ENCODE measurements at regions of chr7 and their contacts with region 1.

Region 1: DNA sequence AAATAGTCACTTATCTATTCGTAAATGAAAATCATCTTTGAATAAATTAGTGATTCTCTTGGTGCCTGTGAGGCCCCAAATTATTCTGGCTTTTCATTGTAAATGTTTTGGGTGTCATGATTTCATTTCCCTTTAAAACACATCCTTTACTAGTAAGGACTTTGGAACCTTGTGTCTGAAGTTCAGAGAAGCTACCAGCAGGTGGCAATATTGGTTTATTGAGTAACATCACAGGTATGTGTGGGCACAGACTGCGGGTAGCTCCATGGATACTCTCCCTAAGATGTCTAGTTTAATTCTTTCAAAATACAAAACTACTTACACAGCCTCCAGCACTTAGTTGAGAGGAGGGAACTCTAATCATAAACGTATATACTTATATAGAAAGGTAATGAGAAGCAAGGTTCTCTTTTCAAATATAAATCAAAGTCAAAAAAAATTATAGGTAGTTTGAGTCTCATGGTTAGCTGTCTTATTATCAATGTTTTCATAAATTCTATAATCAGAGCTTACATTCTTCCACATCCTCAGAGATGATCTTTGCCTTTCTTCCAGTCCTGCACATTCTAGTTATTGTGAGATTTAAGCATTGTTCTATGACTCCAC is 449.6 kb downstream of the GRM8 start:
- DNase-seq: peak; percentile 59
- CTCF ChIP-seq: peak; percentile 69

Region 2: DNA sequence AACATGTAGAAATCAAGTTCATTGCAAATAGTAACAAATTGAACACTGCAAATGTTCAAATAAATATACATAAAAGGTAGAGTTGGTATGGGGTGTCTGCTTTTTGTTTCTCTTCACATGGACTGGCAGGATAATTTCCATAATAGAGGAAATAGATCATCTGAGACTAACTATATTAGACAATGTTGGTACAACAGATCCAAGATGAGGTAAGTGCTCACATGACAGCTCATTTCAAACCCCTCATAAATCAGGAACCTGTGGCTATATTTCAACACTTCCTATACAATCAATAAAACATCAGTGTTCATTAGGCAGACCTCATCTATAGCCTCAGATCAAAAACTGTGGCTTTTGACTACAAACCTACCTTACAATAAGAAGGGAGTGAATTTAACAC is 19.6 kb before region 1 on chr7:
- CTCF ChIA-PET with region 1: interaction called, 12 read pairs
- POLR2A ChIA-PET with region 1: no interaction called
- DNase-seq: no peak
- CTCF ChIP-seq: no peak

Region 3: GRCh38 chr7:126790763-126791162 is 12.4 kb before region 1 on chr7:
- CTCF ChIA-PET with region 1: interaction called, 43 read pairs
- POLR2A ChIA-PET with region 1: no interaction called
- DNase-seq: no peak
- CTCF ChIP-seq: no peak

Region 4: GRCh38 chr7:126930166-126930565 is 127.0 kb after region 1 on chr7:
- CTCF ChIA-PET with region 1: no interaction called
- POLR2A ChIA-PET with region 1: no interaction called
- DNase-seq: no peak
- CTCF ChIP-seq: no peak

Region 5: GRCh38 chr7:127253281-127254162 is 450.4 kb after region 1 on chr7:
- CTCF ChIA-PET with region 1: interaction called, 26 read pairs
- POLR2A ChIA-PET with region 1: no interaction called
- DNase-seq: peak; percentile 77
- CTCF ChIP-seq: peak; percentile 93

Measured in GM10248 (cell line).